Common myeloid progenitor, CD34-positive (primary cell): ENCODE measurements at regions of chr3 and their contacts with region 1.

Region 1: GRCh38 chr3:56801662-56802377 is at the start of gene ARHGEF3:
- DNase-seq: peak; percentile 84 to 90 (median 88)
- H3K4me3 ChIP-seq: peak within 1 kb of the TSS; percentile 69 to 96 (median 88)
- H3K27ac ChIP-seq: peak within 1 kb of the TSS in 1 of 2 experiments; percentile 16
- H3K4me1 ChIP-seq: peaks cover 10 to 48% (median 38%) of the 10 kb centered on the region in 4 experiments
- H3K27me3 ChIP-seq: no peaks in the 10 kb centered on the region

Region 2: GRCh38 chr3:56725175-56725574 is 76.6 kb before region 1 on chr3:
- CTCF ChIA-PET with region 1: interaction called, 18 read pairs
- POLR2A ChIA-PET with region 1: no interaction called
- DNase-seq: peak in 2 of 3 donors; percentile 27 to 43
- H3K4me3 ChIP-seq: no peak overlapping the region
- H3K27ac ChIP-seq: no peak overlapping the region
- H3K4me1 ChIP-seq: peaks cover 0 to 5% (median 2%) of the 10 kb centered on the region in 4 experiments
- H3K27me3 ChIP-seq: no peaks in the 10 kb centered on the region

Region 3: GRCh38 chr3:56747150-56747549 is 54.7 kb before region 1 on chr3:
- CTCF ChIA-PET with region 1: interaction called, 110 read pairs
- POLR2A ChIA-PET with region 1: interaction called, 3 read pairs
- DNase-seq: no peak
- H3K4me3 ChIP-seq: no peak overlapping the region
- H3K27ac ChIP-seq: peak overlapping the region in 1 of 2 experiments; percentile 29
- H3K4me1 ChIP-seq: peaks cover 0 to 25% (median 11%) of the 10 kb centered on the region in 4 experiments
- H3K27me3 ChIP-seq: no peaks in the 10 kb centered on the region

Region 4: DNA sequence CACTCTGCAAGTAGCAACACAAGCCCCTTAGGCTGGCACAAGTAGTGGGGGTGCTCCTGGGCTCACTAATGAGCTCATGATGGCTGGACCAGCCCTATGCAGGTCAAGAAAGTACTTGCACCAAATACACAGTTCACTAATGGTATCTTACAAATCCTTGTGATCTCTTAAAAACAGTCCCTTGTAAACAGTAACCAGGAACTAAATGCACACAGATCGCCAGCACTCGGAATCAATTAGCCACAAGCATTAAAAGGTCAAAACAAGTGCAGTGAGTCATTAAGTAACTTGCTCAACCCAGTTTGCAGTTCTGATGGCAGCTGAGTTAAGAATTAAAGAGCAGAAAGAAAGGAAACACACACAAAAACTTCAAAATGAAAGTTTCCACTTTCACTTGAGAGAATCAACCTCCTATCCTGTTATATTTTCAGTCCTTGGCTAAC is 43.3 kb before region 1 on chr3:
- CTCF ChIA-PET with region 1: interaction called, 110 read pairs
- POLR2A ChIA-PET with region 1: interaction called, 5 read pairs
- DNase-seq: peak; percentile 42 to 87 (median 80)
- H3K4me3 ChIP-seq: peak overlapping the region in 3 of 7 experiments; percentile 13 to 68 (median 15)
- H3K27ac ChIP-seq: peak overlapping the region; percentile 30 to 75
- H3K4me1 ChIP-seq: peaks cover 18 to 56% (median 39%) of the 10 kb centered on the region in 4 experiments
- H3K27me3 ChIP-seq: no peaks in the 10 kb centered on the region

Region 5: DNA sequence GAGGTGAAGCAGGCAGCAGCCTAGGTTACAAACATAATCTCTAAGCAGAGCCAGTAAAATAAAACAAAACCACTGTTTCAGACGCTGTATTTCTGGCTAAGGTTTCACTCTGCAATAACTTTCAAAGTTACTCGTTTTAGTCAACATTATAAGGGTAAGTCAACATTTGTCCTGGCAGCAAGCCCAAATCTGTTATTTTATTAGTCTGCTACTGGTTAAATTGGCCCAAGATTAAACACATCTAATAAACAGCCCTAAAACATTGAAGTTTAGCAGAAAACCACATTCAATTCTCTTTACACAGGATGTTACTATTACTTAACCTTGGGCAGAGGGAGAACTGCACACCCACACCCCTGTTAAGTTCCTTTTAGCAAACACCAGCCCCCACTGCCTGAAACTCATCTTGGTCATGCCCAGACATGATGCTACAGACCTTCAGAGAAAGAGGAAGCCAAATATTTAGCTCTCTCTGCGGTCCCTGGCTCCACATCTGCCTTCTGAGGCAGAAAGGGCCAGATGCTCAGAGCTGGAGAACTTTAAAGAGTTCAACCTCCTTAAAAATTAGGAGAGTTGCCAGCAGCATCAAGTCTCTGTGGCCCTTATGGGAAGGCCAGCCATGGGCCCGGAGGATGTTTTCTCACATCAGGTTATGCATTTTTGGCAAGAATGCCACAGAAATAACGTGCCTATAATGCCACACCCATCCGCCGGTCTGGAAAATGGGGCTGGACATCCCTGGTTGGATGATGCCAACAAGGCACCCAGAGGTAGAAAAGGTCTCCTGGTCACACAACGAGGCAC is 18.0 kb before region 1 on chr3:
- CTCF ChIA-PET with region 1: interaction called, 66 read pairs
- POLR2A ChIA-PET with region 1: no interaction called
- DNase-seq: peak; percentile 85 to 99 (median 98)
- H3K4me3 ChIP-seq: peak overlapping the region in 5 of 7 experiments; percentile 7 to 48 (median 34)
- H3K27ac ChIP-seq: peak overlapping the region in 1 of 2 experiments; percentile 75
- H3K4me1 ChIP-seq: peaks cover 19 to 72% (median 51%) of the 10 kb centered on the region in 4 experiments
- H3K27me3 ChIP-seq: no peaks in the 10 kb centered on the region

Region 6: DNA sequence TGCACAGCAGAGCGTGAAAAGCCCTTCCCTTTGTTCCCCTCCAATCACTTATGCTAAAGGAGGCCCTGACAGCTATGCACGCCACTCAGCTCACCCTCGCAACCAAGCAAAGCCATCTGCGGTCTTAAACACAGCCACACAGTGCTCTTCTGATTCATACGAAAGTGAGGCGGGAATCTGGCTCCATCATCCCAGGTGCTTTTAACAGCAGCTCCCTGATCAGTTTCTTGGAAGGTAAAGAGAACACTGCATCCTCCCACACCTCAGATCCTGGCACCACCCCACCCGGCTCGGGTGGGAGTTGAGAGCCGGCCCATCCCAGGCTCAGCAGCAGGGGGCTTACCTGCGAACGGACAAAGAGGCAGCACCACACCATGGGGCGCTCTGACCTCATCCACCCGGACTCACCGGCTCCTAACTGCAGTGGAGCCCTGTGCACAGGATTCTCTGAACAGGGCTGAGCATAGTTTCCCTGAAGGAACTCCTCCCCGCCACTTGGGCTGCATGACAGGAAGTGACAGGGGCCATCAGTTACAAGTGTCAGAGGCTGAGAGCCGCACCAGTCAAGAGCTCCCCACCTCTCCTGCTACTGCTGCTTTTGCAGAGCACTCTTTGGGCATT is 114.3 kb after region 1 on chr3:
- CTCF ChIA-PET with region 1: interaction called, 22 read pairs
- POLR2A ChIA-PET with region 1: no interaction called
- DNase-seq: peak in 2 of 3 donors; percentile 77 to 86
- H3K4me3 ChIP-seq: peak overlapping the region in 6 of 7 experiments; percentile 59 to 83 (median 72)
- H3K27ac ChIP-seq: peak overlapping the region; percentile 9 to 60
- H3K4me1 ChIP-seq: peaks cover 10 to 55% (median 23%) of the 10 kb centered on the region in 4 experiments
- H3K27me3 ChIP-seq: no peaks in the 10 kb centered on the region